ENCODE measurements at regions of chr5 and their contacts with region 1.

Region 1: GRCh38 chr5:175840050-175840841 is 31.1 kb upstream of the CPLX2 start:
- DNase-seq: peak; percentile 39
- ATAC-seq: no peak
- H3K4me3 ChIP-seq: no peak overlapping the region
- H3K27ac ChIP-seq: no peak overlapping the region
- H3K4me1 ChIP-seq: peaks cover 46% of the 10 kb centered on the region
- H3K27me3 ChIP-seq: no peaks in the 10 kb centered on the region
- CTCF ChIP-seq: peak; percentile 59
- EP300 ChIP-seq: no peak
- POLR2A ChIP-seq: no peak
- RAD21 ChIP-seq: 0 out of 2 replicates have a peak, but pooled peaks have one; percentile 29

Region 2: DNA sequence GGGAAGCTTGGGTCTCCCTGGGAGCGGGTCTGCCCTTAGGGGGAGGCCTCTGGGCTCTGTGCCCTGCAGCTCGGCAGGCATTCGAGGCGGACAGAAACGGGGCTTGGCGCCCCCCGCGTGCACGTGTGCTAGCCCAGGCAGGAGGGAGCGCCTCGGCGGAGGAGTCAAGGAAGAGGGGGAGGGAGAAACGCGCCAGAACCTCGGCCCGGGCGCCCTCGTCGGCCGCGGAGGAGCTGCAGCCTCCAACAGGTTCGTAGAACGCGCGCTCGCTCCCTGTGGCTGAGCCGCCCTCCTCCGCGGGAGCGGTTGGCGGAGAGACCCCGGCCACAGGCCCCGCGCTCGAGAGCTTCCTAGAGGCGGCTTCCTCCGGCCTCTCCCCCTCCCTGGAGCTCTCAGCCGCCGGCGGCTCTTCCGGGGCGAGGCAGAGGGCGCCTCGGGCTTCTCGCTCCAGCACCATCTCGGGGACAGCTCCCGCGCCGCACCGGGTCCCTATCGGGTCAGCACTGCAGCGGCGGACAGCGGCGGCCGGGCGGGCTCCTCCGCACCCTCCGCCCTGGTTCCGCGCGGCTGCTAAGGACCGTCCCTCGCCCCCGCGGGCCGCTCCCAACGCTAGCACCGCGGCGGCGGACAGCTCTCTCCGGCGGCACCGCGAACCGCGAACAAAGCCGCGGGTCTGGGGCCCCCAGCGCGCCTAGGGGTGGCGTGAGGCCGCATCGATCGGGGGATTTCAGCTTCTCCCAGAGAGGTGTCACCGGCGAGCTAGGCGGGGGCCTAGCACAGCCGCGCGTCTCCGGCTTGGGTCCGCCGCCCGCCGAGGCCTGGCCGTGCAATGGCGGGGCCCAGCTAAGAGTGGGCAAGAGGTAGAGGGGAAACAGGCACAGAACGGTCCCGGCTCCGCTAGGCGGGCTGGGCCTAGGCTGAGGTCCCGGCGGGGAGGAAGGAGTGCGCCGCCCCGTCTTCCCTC is 43.4 kb before region 1 on chr5:
- CTCF ChIA-PET with region 1: no interaction called
- POLR2A ChIA-PET with region 1: no interaction called
- in situ Hi-C with region 1: no loop called
- intact Hi-C with region 1: loop called (anchors 5 kb)
- DNase-seq: peak; percentile 68
- ATAC-seq: peak; percentile 98
- H3K4me3 ChIP-seq: peak overlapping the region; percentile 47 to 73 (median 50)
- H3K27ac ChIP-seq: no peak overlapping the region
- H3K4me1 ChIP-seq: peaks cover 18% of the 10 kb centered on the region
- H3K27me3 ChIP-seq: peaks cover 0 to 7% of the 10 kb centered on the region in 2 experiments; a peak in 1 of 5 replicates
- CTCF ChIP-seq: peak; percentile 57
- EP300 ChIP-seq: peak in 1 of 2 experiments; percentile 32; a peak in 1 of 4 replicates
- POLR2A ChIP-seq: no peak
- RAD21 ChIP-seq: peak; percentile 91

Region 3: DNA sequence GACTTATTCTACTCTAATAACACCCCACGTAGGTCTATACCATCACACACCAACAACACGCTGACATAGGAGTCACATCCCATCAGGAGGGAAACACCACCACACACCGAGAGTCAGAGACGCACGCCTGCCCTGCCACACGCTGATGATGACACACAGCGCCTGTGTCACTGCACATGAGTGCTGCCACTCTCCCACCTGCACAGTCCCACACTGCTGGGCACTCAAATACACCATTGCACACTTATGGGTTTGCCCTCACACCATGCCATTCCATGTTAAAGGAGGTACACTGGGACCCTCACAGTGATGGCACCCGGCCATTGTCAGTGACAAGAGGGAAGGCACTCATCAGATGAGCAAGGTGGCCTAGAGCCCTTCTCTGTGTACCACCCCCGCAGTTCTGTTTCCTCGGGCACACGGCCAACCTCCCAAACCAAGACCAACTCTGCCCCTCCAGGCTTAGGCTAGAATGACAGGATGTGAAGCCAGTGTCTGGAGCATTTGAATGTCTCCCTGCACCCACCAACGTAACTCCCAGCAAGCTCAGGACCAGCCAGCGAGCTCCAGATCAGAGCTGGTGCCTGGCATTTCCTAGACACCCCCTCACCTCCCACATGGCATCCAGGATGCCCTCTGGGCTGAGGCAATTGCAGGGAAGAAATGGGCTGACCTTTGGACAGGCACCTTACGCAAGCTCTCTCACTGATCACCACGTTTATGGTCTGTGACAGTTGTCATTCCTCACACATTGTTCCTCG is 27.5 kb after region 1 on chr5:
- CTCF ChIA-PET with region 1: interaction called, 5 read pairs
- POLR2A ChIA-PET with region 1: interaction called, 4 read pairs
- in situ Hi-C with region 1: no loop called
- intact Hi-C with region 1: loop called (anchors 1 kb)
- DNase-seq: peak; percentile 90
- ATAC-seq: peak; percentile 43
- H3K4me3 ChIP-seq: peak overlapping the region in 2 of 3 experiments; percentile 12 to 48; a peak in 3 of 6 replicates
- H3K27ac ChIP-seq: peak overlapping the region; percentile 70
- H3K4me1 ChIP-seq: peaks cover 86% of the 10 kb centered on the region
- H3K27me3 ChIP-seq: no peaks in the 10 kb centered on the region
- CTCF ChIP-seq: peak; percentile 70
- EP300 ChIP-seq: peak; percentile 34 to 85; a peak in 2 of 4 replicates
- POLR2A ChIP-seq: peak in 1 of 2 experiments; percentile 18; a peak in 1 of 4 replicates
- RAD21 ChIP-seq: peak; percentile 82

Region 4: GRCh38 chr5:175920231-175920811 is 80.1 kb after region 1 on chr5:
- CTCF ChIA-PET with region 1: no interaction called
- POLR2A ChIA-PET with region 1: no interaction called
- in situ Hi-C with region 1: no loop called
- intact Hi-C with region 1: no loop called
- DNase-seq: no peak
- ATAC-seq: no peak
- H3K4me3 ChIP-seq: no peak overlapping the region
- H3K27ac ChIP-seq: no peak overlapping the region
- H3K4me1 ChIP-seq: peaks cover 11% of the 10 kb centered on the region
- H3K27me3 ChIP-seq: no peaks in the 10 kb centered on the region
- CTCF ChIP-seq: no peak
- EP300 ChIP-seq: no peak
- POLR2A ChIP-seq: no peak
- RAD21 ChIP-seq: no peak